Caco-2 (cell line): ENCODE measurements at regions of chr3 and their contacts with region 1.

Region 1: GRCh38 chr3:8070011-8070410 is 431.6 kb upstream of the LMCD1 start:
- DNase-seq: no peak
- H3K4me3 ChIP-seq: no peak overlapping the region
- H3K4me3 Mint-ChIP-seq: no peak overlapping the region
- H3K27ac Mint-ChIP-seq: no peak overlapping the region
- H3K4me1 ChIP-seq: no peaks in the 10 kb centered on the region
- H3K4me1 Mint-ChIP-seq: no peaks in the 10 kb centered on the region
- H3K27me3 ChIP-seq: no peaks in the 10 kb centered on the region
- H3K27me3 Mint-ChIP-seq: peaks cover 5% of the 10 kb centered on the region
- CTCF ChIP-seq: no peak

Region 2: GRCh38 chr3:7800006-7800780 is 269.8 kb before region 1 on chr3:
- CTCF ChIA-PET with region 1: interaction called, 3 read pairs
- POLR2A ChIA-PET with region 1: no interaction called
- intact Hi-C with region 1: loop called (anchors 1 kb)
- DNase-seq: no peak
- H3K4me3 ChIP-seq: no peak overlapping the region
- H3K4me3 Mint-ChIP-seq: no peak overlapping the region
- H3K27ac Mint-ChIP-seq: no peak overlapping the region
- H3K4me1 ChIP-seq: no peaks in the 10 kb centered on the region
- H3K4me1 Mint-ChIP-seq: no peaks in the 10 kb centered on the region
- H3K27me3 ChIP-seq: no peaks in the 10 kb centered on the region
- H3K27me3 Mint-ChIP-seq: peaks cover 26% of the 10 kb centered on the region
- CTCF ChIP-seq: peak in 1 of 2 experiments; percentile 39

Region 3: GRCh38 chr3:8087951-8088350 is 17.9 kb after region 1 on chr3:
- CTCF ChIA-PET with region 1: no interaction called
- POLR2A ChIA-PET with region 1: no interaction called
- intact Hi-C with region 1: no loop called
- DNase-seq: no peak
- H3K4me3 ChIP-seq: no peak overlapping the region
- H3K4me3 Mint-ChIP-seq: no peak overlapping the region
- H3K27ac Mint-ChIP-seq: no peak overlapping the region
- H3K4me1 ChIP-seq: no peaks in the 10 kb centered on the region
- H3K4me1 Mint-ChIP-seq: no peaks in the 10 kb centered on the region
- H3K27me3 ChIP-seq: no peaks in the 10 kb centered on the region
- H3K27me3 Mint-ChIP-seq: peaks cover 10% of the 10 kb centered on the region
- CTCF ChIP-seq: no peak

Region 4: GRCh38 chr3:8266730-8267131 is 196.7 kb after region 1 on chr3:
- CTCF ChIA-PET with region 1: no interaction called
- POLR2A ChIA-PET with region 1: no interaction called
- intact Hi-C with region 1: no loop called
- DNase-seq: no peak
- H3K4me3 ChIP-seq: no peak overlapping the region
- H3K4me3 Mint-ChIP-seq: no peak overlapping the region
- H3K27ac Mint-ChIP-seq: no peak overlapping the region
- H3K4me1 ChIP-seq: no peaks in the 10 kb centered on the region
- H3K4me1 Mint-ChIP-seq: no peaks in the 10 kb centered on the region
- H3K27me3 ChIP-seq: no peaks in the 10 kb centered on the region
- H3K27me3 Mint-ChIP-seq: peaks cover 9% of the 10 kb centered on the region
- CTCF ChIP-seq: no peak